ENCODE measurements at regions of chr1 and their contacts with region 1.

Region 1: GRCh38 chr1:199684686-199685273 is 342.7 kb upstream of the NR5A2 start:
- DNase-seq: peak; percentile 87

Region 2: DNA sequence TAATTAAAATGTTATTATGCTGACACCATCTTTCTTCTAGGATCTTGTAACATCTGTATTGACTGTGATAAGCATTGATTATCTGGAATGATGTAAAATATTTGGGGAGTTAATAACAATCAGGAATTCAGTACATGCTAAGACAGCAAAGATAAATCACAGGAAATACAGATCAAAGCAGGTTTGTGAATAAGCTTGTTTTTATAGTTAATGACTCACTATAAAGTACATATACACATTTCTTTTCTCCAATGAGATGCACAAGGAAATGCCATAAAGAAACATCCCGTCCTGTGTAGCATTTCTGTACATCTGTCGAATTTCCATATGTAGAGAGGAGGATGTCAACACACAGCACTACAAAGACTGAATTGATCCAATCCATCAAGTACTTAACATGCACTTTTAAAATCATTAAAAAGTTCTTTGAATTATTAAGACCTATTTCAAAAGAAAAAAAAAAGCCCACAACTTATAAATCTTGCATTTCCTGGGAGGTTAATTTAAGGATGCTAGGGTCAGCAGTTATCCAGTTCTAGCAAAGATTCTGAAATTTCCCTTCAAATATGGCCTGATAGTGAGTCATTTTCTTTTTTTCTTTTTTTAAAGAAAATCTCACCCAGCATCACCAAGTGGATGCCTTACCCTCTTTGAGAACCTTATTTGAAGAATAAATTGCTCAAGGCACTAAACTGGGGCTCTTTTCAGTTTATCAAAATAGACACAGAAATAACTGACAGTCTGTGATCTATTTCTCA is 99.5 kb after region 1 on chr1:
- in situ Hi-C with region 1: no loop called
- DNase-seq: no peak

Region 3: DNA sequence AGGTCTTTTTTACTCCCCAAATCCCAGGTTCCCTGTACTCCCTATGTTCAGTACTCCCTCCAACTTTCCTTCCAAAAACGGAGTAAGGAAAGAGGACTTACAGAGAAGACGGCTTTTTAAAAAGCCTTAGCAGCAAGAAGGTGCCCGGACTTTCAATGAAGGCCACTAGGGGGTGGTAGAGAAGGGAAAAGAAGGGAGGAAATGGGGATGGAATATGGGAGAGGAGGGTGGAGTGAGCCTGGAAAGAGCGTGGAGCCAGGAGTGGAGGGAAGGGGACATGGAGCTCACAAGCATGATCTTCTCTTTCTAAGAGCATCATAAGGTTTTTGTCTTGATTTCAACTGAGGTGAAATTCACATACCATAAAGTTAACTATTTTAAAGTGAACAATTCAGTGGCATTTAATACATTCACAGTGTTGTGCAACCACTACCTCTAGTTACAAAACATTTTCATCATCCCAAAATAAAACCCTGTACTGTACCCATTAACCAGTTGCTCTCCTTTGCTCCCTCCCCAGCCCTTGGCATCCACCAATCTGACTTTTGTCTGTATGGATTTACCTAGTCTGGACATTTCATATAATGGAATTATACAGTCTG is 595.1 kb after region 1 on chr1:
- in situ Hi-C with region 1: loop called (anchors 25 kb)
- DNase-seq: peak; percentile 65

Region 4: GRCh38 chr1:200488375-200489165 is 803.8 kb after region 1 on chr1:
- in situ Hi-C with region 1: loop called (anchors 25 kb)
- DNase-seq: peak; percentile 84